RWPE1 (cell line): ENCODE measurements at regions of chr3 and their contacts with region 1.

Region 1: GRCh38 chr3:157064402-157064801 is 95.5 kb downstream of the CCNL1 start:
- DNase-seq: no peak
- H3K27ac ChIP-seq: no peak overlapping the region
- CTCF ChIP-seq: no peak

Region 2: GRCh38 chr3:157029365-157029790 is 35.0 kb before region 1 on chr3:
- CTCF ChIA-PET with region 1: interaction called, 10 read pairs
- POLR2A ChIA-PET with region 1: no interaction called
- DNase-seq: no peak
- H3K27ac ChIP-seq: no peak overlapping the region
- CTCF ChIP-seq: no peak

Region 3: GRCh38 chr3:157081681-157082210 is 17.3 kb after region 1 on chr3:
- CTCF ChIA-PET with region 1: no interaction called
- POLR2A ChIA-PET with region 1: no interaction called
- DNase-seq: peak; percentile 83
- H3K27ac ChIP-seq: peak overlapping the region; percentile 98
- CTCF ChIP-seq: peak; percentile 91